K562 (cell line): ENCODE measurements at regions of chr7 and their contacts with region 1.

Region 1: DNA sequence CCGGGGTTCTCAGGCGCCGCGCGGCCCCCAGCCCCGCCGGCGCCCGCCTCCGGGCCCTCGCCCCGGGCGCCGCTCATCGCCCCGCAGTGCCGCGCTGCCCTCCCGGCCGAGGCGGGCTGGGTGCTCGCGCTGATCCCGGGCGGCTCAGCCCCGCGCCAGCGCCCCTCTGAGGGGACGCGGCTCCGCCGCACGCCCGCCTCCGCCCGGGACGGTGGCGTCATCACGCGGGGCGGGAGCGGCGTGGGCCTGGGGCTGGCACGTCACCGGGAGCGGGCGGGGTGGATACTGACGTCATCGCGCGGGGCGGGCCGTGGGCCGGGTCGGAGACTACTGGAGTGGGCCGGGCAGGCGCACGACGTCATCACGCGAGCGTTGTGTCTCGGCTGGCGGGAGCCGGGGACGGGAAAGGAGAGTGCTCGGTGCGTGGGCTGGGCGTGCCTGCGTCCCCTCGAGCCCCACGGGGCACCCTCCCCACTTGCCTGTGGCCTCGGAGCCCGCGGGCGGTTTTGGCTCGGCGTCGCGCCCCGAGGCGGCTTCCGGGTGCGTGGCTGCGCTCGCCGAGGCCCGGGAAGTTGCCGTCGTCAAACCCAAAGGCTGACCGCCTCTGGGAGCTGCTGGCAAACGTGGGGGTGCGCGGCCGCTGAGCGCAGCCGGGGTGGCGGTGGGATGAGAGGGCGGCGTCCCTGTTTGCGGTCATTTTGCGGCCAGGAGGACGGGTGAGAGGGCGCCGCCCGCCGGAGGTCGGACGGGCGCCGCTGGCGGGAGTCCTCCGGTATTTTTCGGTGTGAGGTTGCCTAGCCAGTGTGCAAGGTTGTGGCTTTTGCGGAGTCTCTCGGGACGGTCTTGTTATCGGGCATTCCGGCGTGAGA is at the start of gene ESYT2:
- DNase-seq: peak; percentile 99 to 100 (median 100)
- ATAC-seq: peak; percentile 82
- H3K4me3 ChIP-seq: peak within 1 kb of the TSS; percentile 67
- H3K27ac ChIP-seq: peak within 1 kb of the TSS; percentile 98
- H3K4me1 ChIP-seq: peaks cover 34 to 37% of the 10 kb centered on the region in 2 experiments
- H3K27me3 ChIP-seq: no peaks in the 10 kb centered on the region
- CTCF ChIP-seq: peak; percentile 58 to 73 (median 63)
- EP300 ChIP-seq: peak; percentile 56
- POLR2A ChIP-seq: peak; percentile 98
- RAD21 ChIP-seq: peak in 1 of 2 experiments; percentile 56
- polyA plus RNA-seq, gene ESYT2: 5.8 to 8.3 TPM

Region 2: GRCh38 chr7:158695726-158696452 is 133.7 kb before region 1 on chr7:
- CTCF ChIA-PET with region 1: no interaction called
- POLR2A ChIA-PET with region 1: interaction called, 3 read pairs
- in situ Hi-C with region 1: no loop called
- intact Hi-C with region 1: loop called (anchors 2 kb)
- DNase-seq: peak in 3 of 4 experiments; percentile 23 to 67 (median 54)
- ATAC-seq: peak; percentile 72
- H3K4me3 ChIP-seq: no peak overlapping the region
- H3K27ac ChIP-seq: no peak overlapping the region
- H3K4me1 ChIP-seq: peaks cover under 1 to 3% of the 10 kb centered on the region in 2 experiments; a peak in 1 of 5 replicates
- H3K27me3 ChIP-seq: no peaks in the 10 kb centered on the region
- CTCF ChIP-seq: peak; percentile 65 to 89 (median 78)
- EP300 ChIP-seq: no peak
- POLR2A ChIP-seq: no peak
- RAD21 ChIP-seq: peak; percentile 86 to 97

Region 3: DNA sequence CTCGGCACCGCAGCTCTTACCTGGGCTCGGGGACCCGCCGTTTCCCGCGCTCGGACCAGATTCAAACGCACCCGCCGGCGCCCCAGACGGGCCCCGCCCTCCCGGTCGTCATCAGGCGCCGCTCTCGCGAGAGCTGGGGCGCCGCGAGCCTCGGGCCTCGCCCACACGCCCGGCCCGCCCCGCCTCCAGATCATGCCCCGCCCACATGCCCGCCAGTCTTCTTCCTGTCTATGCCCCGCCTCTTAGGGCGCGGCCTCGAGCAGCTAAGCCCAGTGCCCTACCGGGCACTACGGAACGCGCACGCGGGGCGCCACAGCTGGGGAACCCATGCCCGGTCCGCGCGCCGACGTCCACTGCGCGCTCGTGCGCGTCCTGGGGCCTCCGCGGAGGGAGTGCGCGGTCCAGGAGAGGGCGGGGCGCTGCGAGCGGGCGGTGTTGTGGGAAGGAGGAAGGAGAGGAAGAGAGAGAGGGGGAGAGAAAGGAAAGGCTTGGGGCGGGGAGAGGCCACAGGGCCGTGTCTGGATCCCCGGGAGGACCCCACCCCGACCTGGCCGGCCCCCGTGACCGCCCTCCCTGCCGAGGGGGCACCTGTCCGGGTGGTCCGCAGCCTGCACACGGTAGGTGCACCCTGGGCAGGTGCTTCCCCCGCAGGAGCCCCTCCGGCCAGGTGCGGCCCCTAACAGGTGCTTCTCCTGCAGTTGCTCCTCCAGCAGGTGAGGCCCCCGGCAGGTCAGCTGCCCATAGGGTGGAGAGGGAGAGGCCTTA is 124.7 kb before region 1 on chr7 and contains the start of gene NCAPG2:
- CTCF ChIA-PET with region 1: no interaction called
- POLR2A ChIA-PET with region 1: interaction called, 3 read pairs
- in situ Hi-C with region 1: no loop called
- intact Hi-C with region 1: loop called (anchors 2 kb)
- DNase-seq: peak; percentile 99 to 100 (median 100)
- ATAC-seq: peak; percentile 94
- H3K4me3 ChIP-seq: peak within 1 kb of the TSS; percentile 83
- H3K27ac ChIP-seq: peak within 1 kb of the TSS; percentile 96
- H3K4me1 ChIP-seq: peaks cover 31 to 37% of the 10 kb centered on the region in 2 experiments
- H3K27me3 ChIP-seq: no peaks in the 10 kb centered on the region
- CTCF ChIP-seq: peak in 1 of 3 experiments; percentile 30; a peak in 1 of 6 replicates
- EP300 ChIP-seq: no peak
- POLR2A ChIP-seq: peak; percentile 96
- RAD21 ChIP-seq: no peak; a peak in 1 of 4 replicates
- polyA plus RNA-seq, gene NCAPG2: 21.5 to 97.7 TPM

Region 4: GRCh38 chr7:158740013-158740656 is 89.4 kb before region 1 on chr7:
- CTCF ChIA-PET with region 1: no interaction called
- POLR2A ChIA-PET with region 1: no interaction called
- in situ Hi-C with region 1: no loop called
- intact Hi-C with region 1: loop called (anchors 2 kb)
- DNase-seq: peak in 2 of 4 experiments; percentile 48 to 58
- ATAC-seq: peak; percentile 47
- H3K4me3 ChIP-seq: no peak overlapping the region
- H3K27ac ChIP-seq: peak overlapping the region; percentile 71
- H3K4me1 ChIP-seq: peaks cover 22 to 32% of the 10 kb centered on the region in 2 experiments; a peak in 4 of 5 replicates
- H3K27me3 ChIP-seq: no peaks in the 10 kb centered on the region
- CTCF ChIP-seq: peak in 1 of 3 experiments; percentile 8; a peak in 1 of 6 replicates
- EP300 ChIP-seq: no peak
- POLR2A ChIP-seq: no peak
- RAD21 ChIP-seq: peak; percentile 11 to 59; a peak in 2 of 4 replicates

Region 5: DNA sequence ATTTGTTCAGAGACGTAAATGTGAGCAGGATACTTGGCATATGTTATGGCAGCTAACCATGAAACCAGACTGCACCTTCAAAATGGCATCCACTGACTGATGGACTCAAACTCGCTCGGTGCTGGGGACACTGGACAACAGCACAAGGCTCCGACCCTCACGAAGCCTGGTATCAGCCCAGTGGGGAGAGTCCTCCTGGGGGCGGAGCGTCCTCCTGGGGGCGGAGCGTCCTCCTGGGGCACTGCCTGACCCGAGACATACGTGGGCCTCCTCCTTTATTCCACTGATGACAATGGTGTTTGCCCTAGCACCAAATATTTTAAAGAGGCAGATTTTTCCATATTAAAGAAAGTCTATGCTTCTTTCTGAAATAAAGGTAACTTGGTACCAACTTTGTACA is 39.7 kb before region 1 on chr7:
- CTCF ChIA-PET with region 1: no interaction called
- POLR2A ChIA-PET with region 1: no interaction called
- in situ Hi-C with region 1: no loop called
- intact Hi-C with region 1: no loop called
- DNase-seq: peak in 3 of 4 experiments; percentile 33 to 66 (median 55)
- ATAC-seq: peak; percentile 90
- H3K4me3 ChIP-seq: no peak overlapping the region
- H3K27ac ChIP-seq: no peak overlapping the region
- H3K4me1 ChIP-seq: peaks cover 0 to 3% of the 10 kb centered on the region in 2 experiments; a peak in 1 of 5 replicates
- H3K27me3 ChIP-seq: no peaks in the 10 kb centered on the region
- CTCF ChIP-seq: no peak
- EP300 ChIP-seq: no peak
- POLR2A ChIP-seq: no peak
- RAD21 ChIP-seq: no peak

Region 6: GRCh38 chr7:158818325-158819213 is 11.0 kb before region 1 on chr7:
- CTCF ChIA-PET with region 1: no interaction called
- POLR2A ChIA-PET with region 1: interaction called, 23 read pairs
- in situ Hi-C with region 1: no loop called
- intact Hi-C with region 1: no loop called
- DNase-seq: peak; percentile 62 to 86 (median 75)
- ATAC-seq: peak; percentile 76
- H3K4me3 ChIP-seq: no peak overlapping the region; the same call in 1 of the 2 replicates
- H3K27ac ChIP-seq: peak overlapping the region; percentile 73
- H3K4me1 ChIP-seq: peaks cover 28 to 66% of the 10 kb centered on the region in 2 experiments
- H3K27me3 ChIP-seq: no peaks in the 10 kb centered on the region
- CTCF ChIP-seq: peak in 1 of 3 experiments; percentile 29; a peak in 2 of 6 replicates
- EP300 ChIP-seq: peak; percentile 40; the same call in 1 of the 2 replicates
- POLR2A ChIP-seq: no peak
- RAD21 ChIP-seq: peak in 1 of 2 experiments; percentile 24; a peak in 1 of 4 replicates

Region 7: GRCh38 chr7:158847451-158847866 is 17.9 kb after region 1 on chr7:
- CTCF ChIA-PET with region 1: no interaction called
- POLR2A ChIA-PET with region 1: interaction called, 24 read pairs
- in situ Hi-C with region 1: no loop called
- intact Hi-C with region 1: no loop called
- DNase-seq: no peak
- ATAC-seq: peak; percentile 45
- H3K4me3 ChIP-seq: no peak overlapping the region
- H3K27ac ChIP-seq: no peak overlapping the region
- H3K4me1 ChIP-seq: peaks cover 0 to 7% of the 10 kb centered on the region in 2 experiments; a peak in 2 of 5 replicates
- H3K27me3 ChIP-seq: no peaks in the 10 kb centered on the region
- CTCF ChIP-seq: no peak
- EP300 ChIP-seq: no peak
- POLR2A ChIP-seq: no peak
- RAD21 ChIP-seq: no peak

Region 8: DNA sequence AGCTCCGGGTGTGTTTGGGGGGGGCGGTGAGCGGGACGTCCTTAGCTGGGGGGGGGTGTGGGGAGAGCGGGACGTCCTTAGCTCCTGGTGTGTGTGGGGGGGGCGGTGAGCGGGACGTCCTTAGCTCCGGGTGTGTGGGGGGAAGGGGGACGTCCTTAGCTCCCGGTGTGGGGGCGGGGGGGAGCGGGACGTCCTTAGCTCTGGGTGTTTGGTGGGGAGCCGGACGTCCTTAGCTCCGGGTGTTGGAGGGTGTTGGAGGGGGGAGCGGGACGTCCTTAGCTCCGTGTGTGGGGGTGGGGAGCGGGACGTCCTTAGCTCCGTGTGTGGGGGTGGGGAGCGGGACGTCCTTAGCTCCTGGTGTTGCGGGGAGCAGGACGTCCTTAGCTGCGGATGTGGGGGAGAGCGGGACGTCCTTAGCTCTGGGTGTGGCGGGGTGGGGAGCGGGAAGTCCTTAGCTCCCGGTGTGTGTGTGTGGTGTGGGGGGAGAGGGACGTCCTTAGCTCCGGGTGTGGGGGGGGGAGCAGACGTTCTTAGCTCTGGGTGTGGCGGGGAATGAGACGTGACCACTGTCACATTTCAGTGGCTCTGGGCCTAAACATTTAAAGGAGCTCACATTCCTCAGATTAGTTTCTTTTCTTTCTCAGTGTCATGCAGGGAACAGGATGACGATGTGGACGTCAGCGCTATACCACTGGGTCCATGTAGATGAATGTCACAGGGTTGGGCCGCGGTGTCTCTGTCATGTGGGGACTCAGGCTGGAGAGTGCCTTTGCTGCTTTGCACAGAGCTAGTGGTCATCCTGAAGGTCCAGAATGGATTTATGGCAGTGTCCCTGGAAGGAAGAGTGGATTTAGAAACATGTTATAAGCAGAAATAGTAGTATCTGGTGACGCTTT is 34.3 kb after region 1 on chr7:
- CTCF ChIA-PET with region 1: no interaction called
- POLR2A ChIA-PET with region 1: interaction called, 9 read pairs
- in situ Hi-C with region 1: no loop called
- intact Hi-C with region 1: loop called (anchors 1 kb)
- DNase-seq: peak; percentile 94 to 98 (median 96)
- ATAC-seq: peak; percentile 80
- H3K4me3 ChIP-seq: peak overlapping the region; percentile 29
- H3K27ac ChIP-seq: peak overlapping the region; percentile 97
- H3K4me1 ChIP-seq: peaks cover 58 to 64% of the 10 kb centered on the region in 2 experiments
- H3K27me3 ChIP-seq: no peaks in the 10 kb centered on the region
- CTCF ChIP-seq: no peak
- EP300 ChIP-seq: peak; percentile 80
- POLR2A ChIP-seq: peak; percentile 78
- RAD21 ChIP-seq: no peak; a peak in 3 of 4 replicates